Naive thymus-derived CD4-positive, alpha-beta T cell (primary cell): ENCODE measurements at regions of chr2 and their contacts with region 1.

Region 1: DNA sequence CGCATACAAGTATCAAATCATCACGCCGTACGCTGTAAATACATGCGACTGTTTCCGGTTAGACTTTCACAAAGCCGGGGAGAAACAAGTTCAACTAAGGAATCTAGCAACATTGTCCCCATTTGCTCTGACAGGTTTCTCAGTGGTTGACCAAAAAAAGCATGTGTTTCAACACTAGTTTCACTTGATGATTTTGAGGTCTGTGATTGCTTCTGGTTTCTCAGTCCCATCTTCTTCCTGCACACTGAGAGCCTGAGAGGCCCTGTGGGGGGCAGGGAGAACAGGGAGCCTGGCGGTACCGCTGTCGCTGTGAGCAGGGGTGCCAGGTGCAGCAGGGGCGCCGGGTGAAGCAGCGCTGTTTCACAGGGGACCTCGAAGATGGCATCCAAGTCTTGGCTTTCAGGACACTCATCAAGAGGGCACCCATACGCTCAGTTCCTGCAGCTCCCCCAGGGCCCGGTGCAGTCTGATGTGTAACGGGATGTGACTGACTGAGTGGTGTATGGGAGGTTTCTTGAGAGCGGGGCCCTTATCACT is 270.9 kb downstream of the TWIST2 start:
- DNase-seq: peak in 2 of 9 donors; percentile 10 to 21
- ATAC-seq: peak; percentile 36
- H3K4me3 ChIP-seq: no peak overlapping the region
- H3K4me3 Mint-ChIP-seq: peak overlapping the region in 4 of 10 donors; percentile 4 to 33 (median 16)
- H3K27ac ChIP-seq: no peak overlapping the region
- H3K27ac Mint-ChIP-seq: peak overlapping the region in 7 of 9 donors; percentile 2 to 78 (median 40)
- H3K4me1 ChIP-seq: no peaks in the 10 kb centered on the region
- H3K4me1 Mint-ChIP-seq: peaks cover 11 to 38% (median 28%) of the 10 kb centered on the region in 7 donors
- H3K27me3 ChIP-seq: no peaks in the 10 kb centered on the region
- H3K27me3 Mint-ChIP-seq: no peaks in the 10 kb centered on the region

Region 2: GRCh38 chr2:239093952-239094351 is 24.8 kb before region 1 on chr2:
- CTCF ChIA-PET with region 1: no interaction called
- POLR2A ChIA-PET with region 1: no interaction called
- intact Hi-C with region 1: loop called in 1 of 2 experiments (anchors 2 kb)
- DNase-seq: no peak
- ATAC-seq: no peak
- H3K4me3 ChIP-seq: no peak overlapping the region
- H3K4me3 Mint-ChIP-seq: no peak overlapping the region
- H3K27ac ChIP-seq: no peak overlapping the region
- H3K27ac Mint-ChIP-seq: peak overlapping the region in 1 of 9 donors; percentile 51
- H3K4me1 ChIP-seq: no peaks in the 10 kb centered on the region
- H3K4me1 Mint-ChIP-seq: peaks cover 0 to 6% (median 0%) of the 10 kb centered on the region in 7 donors
- H3K27me3 ChIP-seq: no peaks in the 10 kb centered on the region
- H3K27me3 Mint-ChIP-seq: no peaks in the 10 kb centered on the region

Region 3: GRCh38 chr2:239137165-239137897 is 18.6 kb after region 1 on chr2:
- CTCF ChIA-PET with region 1: no interaction called
- POLR2A ChIA-PET with region 1: no interaction called
- intact Hi-C with region 1: no loop called
- DNase-seq: no peak
- ATAC-seq: peak; percentile 21
- H3K4me3 ChIP-seq: no peak overlapping the region
- H3K4me3 Mint-ChIP-seq: no peak overlapping the region
- H3K27ac ChIP-seq: no peak overlapping the region
- H3K27ac Mint-ChIP-seq: peak overlapping the region in 2 of 9 donors; percentile 43 to 46
- H3K4me1 ChIP-seq: peaks cover 0 to 8% of the 10 kb centered on the region in 2 donors
- H3K4me1 Mint-ChIP-seq: peaks cover 0 to 6% (median 3%) of the 10 kb centered on the region in 7 donors
- H3K27me3 ChIP-seq: no peaks in the 10 kb centered on the region
- H3K27me3 Mint-ChIP-seq: no peaks in the 10 kb centered on the region

Region 4: GRCh38 chr2:239252801-239253200 is 134.1 kb after region 1 on chr2:
- CTCF ChIA-PET with region 1: no interaction called
- POLR2A ChIA-PET with region 1: no interaction called
- intact Hi-C with region 1: no loop called
- DNase-seq: no peak
- ATAC-seq: peak; percentile 71
- H3K4me3 ChIP-seq: peak overlapping the region; percentile 18
- H3K4me3 Mint-ChIP-seq: peak overlapping the region in 9 of 10 donors; percentile 82 to 93 (median 87)
- H3K27ac ChIP-seq: peak overlapping the region; percentile 23
- H3K27ac Mint-ChIP-seq: peak overlapping the region in 8 of 9 donors; percentile 61 to 92 (median 81)
- H3K4me1 ChIP-seq: peaks cover 5 to 55% of the 10 kb centered on the region in 2 donors
- H3K4me1 Mint-ChIP-seq: peaks cover 47 to 92% (median 74%) of the 10 kb centered on the region in 7 donors
- H3K27me3 ChIP-seq: no peaks in the 10 kb centered on the region
- H3K27me3 Mint-ChIP-seq: peaks cover 0 to 4% (median 0%) of the 10 kb centered on the region in 5 donors